ENCODE measurements at regions of chr4 and their contacts with region 1.

Region 1: GRCh38 chr4:30024526-30024925 is 695.6 kb upstream of the PCDH7 start:
- DNase-seq: no peak
- ATAC-seq: no peak
- H3K4me3 ChIP-seq: no peak overlapping the region
- H3K27ac ChIP-seq: no peak overlapping the region
- H3K4me1 ChIP-seq: no peaks in the 10 kb centered on the region
- H3K27me3 ChIP-seq: no peaks in the 10 kb centered on the region
- CTCF ChIP-seq: no peak

Region 2: GRCh38 chr4:29560452-29560851 is 464.1 kb before region 1 on chr4:
- intact Hi-C with region 1: no loop called
- DNase-seq: no peak
- ATAC-seq: no peak
- H3K4me3 ChIP-seq: no peak overlapping the region
- H3K27ac ChIP-seq: no peak overlapping the region
- H3K4me1 ChIP-seq: no peaks in the 10 kb centered on the region
- H3K27me3 ChIP-seq: no peaks in the 10 kb centered on the region
- CTCF ChIP-seq: no peak

Region 3: DNA sequence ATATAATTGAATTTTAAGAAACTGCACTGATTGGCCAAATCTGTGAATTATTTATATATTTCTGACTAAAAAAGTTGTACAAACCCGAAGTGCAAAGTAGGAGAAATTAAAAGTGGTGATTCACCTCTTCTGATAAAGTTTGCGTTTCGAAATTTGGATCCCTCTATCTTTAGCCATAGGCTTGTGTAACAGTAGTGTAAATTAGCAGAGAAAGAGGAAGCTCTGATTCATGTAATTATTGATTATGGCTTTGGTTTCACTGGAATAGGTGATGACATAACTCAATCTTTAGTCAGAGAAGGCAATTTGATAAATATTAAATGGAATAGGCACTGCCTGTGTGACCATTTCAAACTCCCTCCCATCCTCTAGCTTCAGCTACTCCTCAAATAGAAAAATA is 22.2 kb before region 1 on chr4:
- intact Hi-C with region 1: loop called in 1 of 10 experiments (anchors 2 kb)
- DNase-seq: no peak
- ATAC-seq: no peak
- H3K4me3 ChIP-seq: no peak overlapping the region
- H3K27ac ChIP-seq: no peak overlapping the region
- H3K4me1 ChIP-seq: no peaks in the 10 kb centered on the region
- H3K27me3 ChIP-seq: no peaks in the 10 kb centered on the region
- CTCF ChIP-seq: no peak

Region 4: DNA sequence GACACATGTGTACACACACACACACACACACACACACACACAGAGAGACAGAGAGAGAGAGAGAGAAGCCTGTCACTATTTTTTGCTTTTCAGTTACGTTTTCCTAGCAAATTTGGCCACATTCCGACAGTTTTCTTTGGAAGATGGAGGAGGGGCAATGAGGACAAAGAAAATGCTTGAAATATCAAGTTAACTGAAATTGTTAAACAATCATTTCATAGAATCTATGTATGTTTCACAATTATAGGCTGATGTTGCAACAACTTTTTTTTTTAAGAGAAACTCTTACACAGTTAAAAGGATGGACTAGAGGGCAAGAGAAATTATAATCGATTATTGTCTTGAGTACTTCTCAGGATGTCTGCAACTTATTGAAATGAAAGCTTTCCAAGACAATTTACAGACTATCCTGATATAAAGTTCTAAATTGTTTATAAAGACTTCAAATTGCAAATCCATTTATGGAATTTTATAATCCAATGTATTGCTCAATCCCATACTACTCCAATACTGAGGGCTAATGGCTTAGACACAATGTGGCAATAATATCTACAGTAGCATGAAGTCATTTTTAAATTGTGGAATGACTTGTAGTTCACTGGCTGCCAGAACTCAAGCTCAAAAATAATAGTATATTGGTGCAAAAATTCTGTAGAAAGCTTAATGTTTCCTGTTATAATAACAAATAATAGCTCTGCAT is 48.6 kb after region 1 on chr4:
- intact Hi-C with region 1: no loop called
- DNase-seq: no peak
- ATAC-seq: no peak
- H3K4me3 ChIP-seq: no peak overlapping the region
- H3K27ac ChIP-seq: no peak overlapping the region
- H3K4me1 ChIP-seq: no peaks in the 10 kb centered on the region
- H3K27me3 ChIP-seq: no peaks in the 10 kb centered on the region
- CTCF ChIP-seq: no peak

Measured in heart right ventricle (tissue), 16 donors.